CD14-positive monocyte (primary cell): ENCODE measurements at regions of chr2 and their contacts with region 1.

Region 1: DNA sequence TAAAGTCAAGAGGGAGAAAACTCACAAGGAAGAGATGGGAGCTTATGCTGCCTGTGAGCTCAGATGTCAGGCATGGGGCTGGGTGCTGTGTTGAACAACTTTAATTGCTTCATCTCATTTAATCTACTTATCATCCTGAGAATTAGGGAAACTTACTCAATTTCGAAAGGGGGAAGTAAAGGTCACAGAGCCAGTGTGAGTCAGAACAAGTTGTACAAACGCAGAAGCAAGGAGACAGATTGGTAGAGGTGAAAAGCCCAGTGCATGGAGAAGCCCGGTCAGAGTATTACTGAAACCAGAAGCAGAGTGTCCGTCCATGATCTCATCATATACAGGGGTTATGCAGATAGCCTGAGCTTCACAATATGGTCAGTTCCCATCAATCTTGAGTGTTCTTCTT is 281.1 kb upstream of the POU3F3 start:
- DNase-seq: peak; percentile 89 to 96 (median 93)
- H3K4me3 ChIP-seq: no peak overlapping the region
- H3K4me3 Mint-ChIP-seq: peak overlapping the region in 1 of 2 donors; percentile 48
- H3K27ac ChIP-seq: peak overlapping the region; percentile 65 to 77
- H3K27ac Mint-ChIP-seq: peak overlapping the region; percentile 76 to 94 (median 90)
- H3K4me1 ChIP-seq: peaks cover 21% of the 10 kb centered on the region in 2 donors
- H3K4me1 Mint-ChIP-seq: peaks cover 24% of the 10 kb centered on the region
- H3K27me3 ChIP-seq: no peaks in the 10 kb centered on the region
- H3K27me3 Mint-ChIP-seq: peaks cover 0 to 5% (median 0%) of the 10 kb centered on the region in 3 donors
- CTCF ChIP-seq: no peak

Region 2: GRCh38 chr2:104487366-104487765 is 85.5 kb before region 1 on chr2:
- intact Hi-C with region 1: loop called (anchors 10 kb)
- DNase-seq: peak; percentile 49 to 70 (median 69)
- H3K4me3 ChIP-seq: peak overlapping the region in 1 of 3 experiments; percentile 40
- H3K4me3 Mint-ChIP-seq: peak overlapping the region; percentile 7 to 67
- H3K27ac ChIP-seq: peak overlapping the region in 1 of 2 donors; percentile 6
- H3K27ac Mint-ChIP-seq: peak overlapping the region in 6 of 7 donors; percentile 17 to 84 (median 56)
- H3K4me1 ChIP-seq: peaks cover 10 to 17% of the 10 kb centered on the region in 2 donors
- H3K4me1 Mint-ChIP-seq: peaks cover 18% of the 10 kb centered on the region
- H3K27me3 ChIP-seq: no peaks in the 10 kb centered on the region
- H3K27me3 Mint-ChIP-seq: peaks cover 1 to 2% (median 1%) of the 10 kb centered on the region in 3 donors
- CTCF ChIP-seq: no peak